A673 (cell line): ENCODE measurements at regions of chr20 and their contacts with region 1.

Region 1: GRCh38 chr20:37192137-37192854 is 12.9 kb upstream of the MROH8 start:
- DNase-seq: peak; percentile 87
- H3K4me3 ChIP-seq: no peak overlapping the region
- H3K27ac ChIP-seq: no peak overlapping the region
- H3K4me1 ChIP-seq: peaks cover 21% of the 10 kb centered on the region
- H3K27me3 ChIP-seq: no peaks in the 10 kb centered on the region
- CTCF ChIP-seq: peak; percentile 95

Region 2: GRCh38 chr20:37020636-37021035 is 171.7 kb before region 1 on chr20:
- CTCF ChIA-PET with region 1: no interaction called
- POLR2A ChIA-PET with region 1: no interaction called
- intact Hi-C with region 1: no loop called
- DNase-seq: no peak
- H3K4me3 ChIP-seq: no peak overlapping the region
- H3K27ac ChIP-seq: no peak overlapping the region
- H3K4me1 ChIP-seq: no peaks in the 10 kb centered on the region
- H3K27me3 ChIP-seq: no peaks in the 10 kb centered on the region
- CTCF ChIP-seq: no peak

Region 3: DNA sequence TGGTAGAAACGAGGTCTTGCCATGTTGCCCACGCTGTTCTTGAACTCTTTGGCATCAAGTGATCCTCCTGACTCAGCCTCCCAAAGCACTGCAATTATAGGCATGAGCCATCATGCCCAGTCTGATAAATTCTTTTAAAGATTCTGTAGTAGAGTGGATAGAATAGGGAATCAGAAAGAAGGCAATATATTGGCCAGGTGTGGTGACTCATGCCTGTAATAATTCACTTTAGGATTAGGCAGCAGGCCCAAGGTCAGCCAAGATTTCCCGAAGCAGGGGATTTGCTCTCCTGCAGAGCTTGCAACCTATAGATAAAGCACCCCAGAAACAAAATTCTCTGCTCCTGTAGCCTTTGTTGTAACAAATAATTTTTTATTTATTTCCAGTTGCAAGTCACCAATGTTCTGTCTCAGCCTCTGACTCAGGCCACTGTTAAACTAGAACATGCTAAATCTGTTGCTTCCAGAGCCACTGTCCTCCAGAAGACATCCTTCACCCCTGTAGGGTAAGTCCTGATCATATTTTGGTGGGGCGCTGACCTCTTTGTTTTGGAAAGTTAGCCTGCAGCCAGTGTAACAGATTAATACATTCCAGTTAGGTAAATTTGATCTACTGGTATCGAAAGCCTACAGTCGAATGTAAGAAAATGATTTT is 17.5 kb after region 1 on chr20:
- CTCF ChIA-PET with region 1: interaction called, 10 read pairs
- POLR2A ChIA-PET with region 1: no interaction called
- intact Hi-C with region 1: no loop called
- DNase-seq: no peak
- H3K4me3 ChIP-seq: no peak overlapping the region
- H3K27ac ChIP-seq: no peak overlapping the region
- H3K4me1 ChIP-seq: no peaks in the 10 kb centered on the region
- H3K27me3 ChIP-seq: no peaks in the 10 kb centered on the region
- CTCF ChIP-seq: no peak